Activated CD4-positive, alpha-beta T cell treated with anti-CD3 and anti-CD28 coated beads for 36 hours (primary cell): ENCODE measurements at regions of chr19 and their contacts with region 1.

Region 1: DNA sequence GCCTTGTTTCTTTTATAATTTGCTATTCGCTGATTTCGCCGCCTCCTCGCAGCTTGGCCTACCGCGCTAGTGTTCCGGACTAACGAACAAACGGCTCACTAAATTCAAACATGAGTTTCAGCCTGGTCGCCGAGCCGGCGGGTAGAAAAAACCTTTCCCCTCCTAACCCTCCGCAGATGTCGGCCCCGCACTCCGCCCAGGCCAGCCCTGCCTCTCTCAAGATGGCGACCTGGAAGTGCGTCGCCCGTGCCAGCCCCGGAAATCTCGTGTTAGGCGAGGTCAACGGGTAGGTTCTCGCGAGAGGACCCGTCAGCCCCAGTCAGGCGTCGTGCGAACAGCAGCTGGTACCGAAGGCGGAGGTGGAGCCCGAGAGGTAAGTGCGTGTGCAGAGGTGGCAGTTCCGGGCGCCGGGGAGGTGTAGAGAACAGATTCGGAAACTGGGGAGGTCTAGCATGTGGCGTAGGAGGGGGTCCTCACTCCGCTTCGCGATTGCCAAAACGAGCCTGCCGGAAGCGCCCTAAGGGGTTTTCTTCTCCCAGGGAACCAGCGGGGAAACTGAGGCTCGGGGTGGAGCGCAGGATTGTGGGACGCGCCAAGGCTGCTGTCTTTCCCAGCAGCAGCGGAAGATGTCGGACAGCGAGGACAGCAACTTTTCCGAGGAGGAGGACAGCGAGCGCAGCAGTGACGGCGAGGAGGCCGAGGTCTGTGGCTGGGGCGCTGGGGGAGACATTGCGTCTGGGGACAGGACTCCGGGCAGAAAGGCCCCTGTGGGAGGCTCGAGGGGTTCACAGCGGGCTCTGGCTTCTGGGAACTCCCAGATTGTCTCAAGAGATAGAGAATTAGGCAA is at the start of gene SUPT5H:
- DNase-seq: peak; percentile 99
- ATAC-seq: peak; percentile 89
- H3K4me3 Mint-ChIP-seq: peak within 1 kb of the TSS; percentile 100
- H3K27ac Mint-ChIP-seq: peak within 1 kb of the TSS; percentile 100
- H3K4me1 Mint-ChIP-seq: peaks cover 43% of the 10 kb centered on the region
- H3K27me3 Mint-ChIP-seq: no peaks in the 10 kb centered on the region
- total RNA-seq, gene SUPT5H: 157 to 165 TPM

Region 2: DNA sequence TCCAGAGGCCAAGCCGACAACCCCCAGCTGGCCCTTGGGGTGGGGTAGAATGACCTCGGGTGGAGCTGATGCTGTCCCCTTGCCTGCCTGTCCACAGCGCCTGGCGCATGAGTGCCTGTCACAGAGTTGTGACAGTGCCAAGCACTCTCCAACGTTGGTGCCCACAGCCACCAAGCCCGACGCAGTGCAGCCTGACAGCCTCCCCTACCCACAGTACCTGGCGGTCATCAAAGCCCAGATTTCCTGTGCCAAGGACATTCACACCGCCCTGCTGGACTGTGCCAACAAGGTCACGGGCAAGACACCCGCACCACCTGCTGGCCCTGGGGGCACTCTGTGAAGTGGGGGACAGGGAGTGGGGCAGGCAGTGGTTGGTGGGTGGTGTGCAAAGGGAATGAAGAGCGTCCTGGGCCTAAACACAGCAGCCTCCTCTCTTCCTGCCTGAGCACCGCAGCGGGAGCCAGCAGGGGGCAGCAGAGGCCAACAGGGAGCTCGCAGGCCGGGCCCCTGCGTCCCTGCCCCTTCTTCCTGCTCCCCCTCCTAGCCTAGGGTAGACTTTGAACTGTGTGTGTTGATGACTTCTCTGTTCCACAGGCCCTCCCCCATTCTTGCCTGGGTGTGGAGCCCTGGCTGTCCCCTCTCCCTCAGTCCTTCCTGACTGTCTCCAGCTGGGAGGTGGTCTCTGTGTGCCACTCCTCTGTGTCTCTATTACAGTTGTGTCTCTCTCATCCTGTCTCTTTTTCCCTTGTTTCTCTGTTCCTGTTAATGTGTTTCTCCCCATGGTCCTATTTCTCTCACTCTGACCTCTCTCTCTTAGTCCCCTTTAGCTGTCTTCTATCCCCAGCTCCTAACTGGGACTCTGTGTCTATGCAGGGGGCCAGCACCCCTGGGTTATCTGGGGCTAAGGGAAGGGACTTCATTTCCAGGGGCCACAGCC is 47.9 kb before region 1 on chr19:
- CTCF ChIA-PET with region 1: interaction called, 6 read pairs
- POLR2A ChIA-PET with region 1: interaction called, 5 read pairs
- intact Hi-C with region 1: loop called in 1 of 2 experiments (anchors 2 kb)
- DNase-seq: peak; percentile 97
- ATAC-seq: peak; percentile 58
- H3K4me3 Mint-ChIP-seq: peak overlapping the region; percentile 52
- H3K27ac Mint-ChIP-seq: peak overlapping the region; percentile 97
- H3K4me1 Mint-ChIP-seq: peaks cover 59% of the 10 kb centered on the region
- H3K27me3 Mint-ChIP-seq: no peaks in the 10 kb centered on the region

Region 3: DNA sequence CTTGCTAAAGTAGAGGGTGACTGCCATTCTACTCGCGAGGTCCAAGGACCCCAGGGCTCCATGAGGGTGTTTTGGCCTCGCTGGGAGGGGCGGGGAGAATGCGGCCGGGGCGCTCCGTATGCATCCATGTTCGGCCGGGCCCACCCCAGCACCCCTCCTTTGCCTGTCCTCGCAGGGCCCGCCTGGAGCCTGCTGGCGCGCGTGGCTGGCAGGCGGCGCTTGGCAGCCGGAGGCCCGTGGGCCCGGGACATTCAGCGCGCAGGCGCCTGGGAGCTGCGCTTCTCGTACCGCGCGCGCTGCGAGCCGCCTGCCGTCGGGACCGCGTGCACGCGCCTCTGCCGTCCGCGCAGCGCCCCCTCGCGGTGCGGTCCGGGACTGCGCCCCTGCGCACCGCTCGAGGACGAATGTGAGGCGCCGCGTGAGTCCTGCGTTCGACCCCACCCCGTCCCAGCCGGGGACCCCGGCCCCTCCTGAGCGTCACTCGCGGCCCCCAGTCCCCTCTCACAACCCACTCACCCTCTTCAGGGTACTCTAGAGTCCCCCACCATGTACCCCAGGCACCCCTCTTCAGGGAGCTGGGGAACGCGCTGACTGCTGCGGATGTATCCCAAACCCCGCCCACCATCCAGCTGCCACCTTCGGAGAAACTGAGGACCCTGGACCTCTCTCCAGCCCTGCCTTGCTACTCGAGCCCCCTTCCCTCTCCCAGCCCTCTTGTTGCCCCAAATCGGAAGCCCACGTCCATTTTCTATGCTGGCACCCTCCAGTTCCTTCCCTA is 57.3 kb after region 1 on chr19:
- CTCF ChIA-PET with region 1: interaction called, 13 read pairs
- POLR2A ChIA-PET with region 1: interaction called, 5 read pairs
- intact Hi-C with region 1: loop called (anchors 1 to 5 kb)
- DNase-seq: peak; percentile 89
- ATAC-seq: peak; percentile 48
- H3K4me3 Mint-ChIP-seq: no peak overlapping the region
- H3K27ac Mint-ChIP-seq: no peak overlapping the region
- H3K4me1 Mint-ChIP-seq: peaks cover 29% of the 10 kb centered on the region
- H3K27me3 Mint-ChIP-seq: peaks cover 55% of the 10 kb centered on the region

Region 4: DNA sequence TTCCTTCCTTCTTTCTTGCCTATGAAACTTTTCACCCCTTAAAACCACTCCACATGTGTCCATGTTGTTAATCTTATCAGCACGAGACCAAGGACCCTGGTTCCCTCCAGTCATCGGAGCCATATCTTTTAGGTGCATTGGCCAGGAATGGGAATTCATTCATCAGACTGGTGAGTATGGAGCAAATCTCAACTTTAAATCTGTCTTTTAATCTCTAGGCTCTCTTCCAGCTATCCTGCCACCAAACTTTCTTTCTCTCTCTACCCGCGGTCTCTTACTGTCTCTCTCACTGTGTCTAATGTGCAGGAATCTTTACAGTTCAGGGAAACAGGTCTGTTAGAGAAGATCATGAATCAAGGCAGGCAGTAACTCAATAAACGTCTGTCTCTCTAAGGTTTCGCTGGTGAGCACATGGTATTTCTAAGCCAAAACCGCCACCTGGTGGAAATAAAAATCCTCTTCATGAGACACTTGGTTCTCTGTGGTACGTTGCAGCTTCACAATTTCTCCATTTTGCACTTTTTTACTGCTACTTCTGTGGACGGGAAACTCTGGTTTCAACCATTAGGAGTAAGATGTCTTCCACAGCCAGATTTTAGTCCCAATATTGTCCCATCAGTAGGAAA is 226.4 kb after region 1 on chr19:
- CTCF ChIA-PET with region 1: interaction called, 4 read pairs
- POLR2A ChIA-PET with region 1: no interaction called
- intact Hi-C with region 1: loop called (anchors 1 kb)
- DNase-seq: peak; percentile 64
- ATAC-seq: peak; percentile 67
- H3K4me3 Mint-ChIP-seq: no peak overlapping the region
- H3K27ac Mint-ChIP-seq: peak overlapping the region; percentile 45
- H3K4me1 Mint-ChIP-seq: peaks cover 27% of the 10 kb centered on the region
- H3K27me3 Mint-ChIP-seq: peaks cover 8% of the 10 kb centered on the region

Region 5: GRCh38 chr19:39846176-39846677 is 400.7 kb after region 1 on chr19 and contains the start of gene FBL:
- CTCF ChIA-PET with region 1: interaction called, 3 read pairs
- POLR2A ChIA-PET with region 1: no interaction called
- intact Hi-C with region 1: loop called in 1 of 2 experiments (anchors 2 kb)
- DNase-seq: peak; percentile 99
- ATAC-seq: peak; percentile 88
- H3K4me3 Mint-ChIP-seq: peak within 1 kb of the TSS; percentile 96
- H3K27ac Mint-ChIP-seq: peak within 1 kb of the TSS; percentile 94
- H3K4me1 Mint-ChIP-seq: peaks cover 48% of the 10 kb centered on the region
- H3K27me3 Mint-ChIP-seq: no peaks in the 10 kb centered on the region
- total RNA-seq, gene FBL: 742 to 890 TPM